H1 (cell line): ENCODE measurements at regions of chr4 and their contacts with region 1.

Region 1: DNA sequence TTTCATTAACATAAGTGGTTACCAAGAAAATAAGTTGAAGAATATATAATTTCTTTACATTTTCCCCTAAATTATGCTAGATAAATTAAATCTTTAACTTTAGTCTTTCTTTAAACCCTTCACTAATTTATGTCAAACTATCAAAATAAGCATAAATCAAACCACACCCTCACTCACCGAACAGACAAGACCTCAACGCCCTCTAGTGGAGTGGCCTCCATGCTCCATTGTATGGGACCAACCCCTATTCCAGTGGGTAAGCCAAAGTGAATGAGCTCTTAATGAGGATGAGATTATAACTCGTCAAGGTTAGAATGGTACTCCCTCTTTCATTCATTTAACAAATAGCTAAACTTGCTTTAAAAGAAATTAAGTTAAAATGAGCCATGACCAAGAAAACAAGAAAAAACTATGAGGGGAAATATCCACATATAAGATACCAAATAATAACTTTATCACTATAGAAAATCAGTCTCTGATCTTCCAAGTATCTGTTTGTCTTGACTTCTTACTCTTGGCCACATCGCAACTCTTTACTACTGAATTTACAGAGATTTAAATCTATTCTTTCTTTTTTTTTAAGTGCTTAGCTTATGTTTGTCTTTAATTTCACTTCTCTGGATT is 15.6 kb upstream of the BBS12 start:
- DNase-seq: peak in 1 of 2 experiments; percentile 69
- H3K4me3 ChIP-seq: no peak overlapping the region
- H3K27ac ChIP-seq: no peak overlapping the region
- H3K4me1 ChIP-seq: no peaks in the 10 kb centered on the region
- H3K27me3 ChIP-seq: no peaks in the 10 kb centered on the region
- CTCF ChIP-seq: peak; percentile 72 to 88 (median 85)
- EP300 ChIP-seq: no peak
- POLR2A ChIP-seq: no peak
- RAD21 ChIP-seq: peak; percentile 84

Region 2: DNA sequence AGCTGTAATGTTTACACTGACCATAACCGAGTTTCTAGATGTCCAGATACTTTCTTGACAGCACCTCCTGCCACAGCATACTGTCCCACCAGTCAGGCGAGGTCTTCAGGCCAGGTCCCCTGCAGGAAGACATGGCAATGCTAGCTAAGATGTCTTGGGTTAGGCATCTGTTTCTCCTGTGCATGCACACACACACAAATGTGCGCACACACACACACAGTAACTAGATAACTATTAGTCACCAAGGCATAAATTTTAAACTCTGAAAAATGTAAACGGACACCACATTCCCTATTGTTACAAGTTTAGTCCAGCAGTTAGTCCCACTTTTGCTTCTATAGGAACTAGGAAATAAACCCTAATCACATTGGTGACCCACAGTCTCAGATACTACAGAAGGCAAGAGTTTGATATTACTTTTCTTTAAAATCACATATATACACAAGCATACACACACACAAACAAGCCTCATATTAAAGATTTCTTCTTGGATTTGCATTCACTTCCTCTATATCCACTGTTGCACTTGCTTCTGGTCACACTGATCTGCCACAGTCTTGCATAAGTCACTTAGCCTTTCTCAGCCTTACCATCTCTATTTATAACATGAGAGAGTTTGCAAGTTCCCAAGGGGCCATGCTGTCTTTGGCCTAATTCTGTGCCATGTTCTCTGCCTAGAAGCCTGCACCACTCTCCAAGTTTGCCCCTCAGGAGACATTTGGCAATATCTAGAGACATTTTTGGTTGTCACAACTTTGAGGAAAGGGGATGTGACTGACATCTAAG is 128.3 kb before region 1 on chr4:
- CTCF ChIA-PET with region 1: interaction called, 10 read pairs
- POLR2A ChIA-PET with region 1: no interaction called
- DNase-seq: no peak
- H3K4me3 ChIP-seq: no peak overlapping the region
- H3K27ac ChIP-seq: no peak overlapping the region
- H3K4me1 ChIP-seq: no peaks in the 10 kb centered on the region
- H3K27me3 ChIP-seq: no peaks in the 10 kb centered on the region
- CTCF ChIP-seq: no peak
- EP300 ChIP-seq: no peak
- POLR2A ChIP-seq: no peak
- RAD21 ChIP-seq: no peak

Region 3: DNA sequence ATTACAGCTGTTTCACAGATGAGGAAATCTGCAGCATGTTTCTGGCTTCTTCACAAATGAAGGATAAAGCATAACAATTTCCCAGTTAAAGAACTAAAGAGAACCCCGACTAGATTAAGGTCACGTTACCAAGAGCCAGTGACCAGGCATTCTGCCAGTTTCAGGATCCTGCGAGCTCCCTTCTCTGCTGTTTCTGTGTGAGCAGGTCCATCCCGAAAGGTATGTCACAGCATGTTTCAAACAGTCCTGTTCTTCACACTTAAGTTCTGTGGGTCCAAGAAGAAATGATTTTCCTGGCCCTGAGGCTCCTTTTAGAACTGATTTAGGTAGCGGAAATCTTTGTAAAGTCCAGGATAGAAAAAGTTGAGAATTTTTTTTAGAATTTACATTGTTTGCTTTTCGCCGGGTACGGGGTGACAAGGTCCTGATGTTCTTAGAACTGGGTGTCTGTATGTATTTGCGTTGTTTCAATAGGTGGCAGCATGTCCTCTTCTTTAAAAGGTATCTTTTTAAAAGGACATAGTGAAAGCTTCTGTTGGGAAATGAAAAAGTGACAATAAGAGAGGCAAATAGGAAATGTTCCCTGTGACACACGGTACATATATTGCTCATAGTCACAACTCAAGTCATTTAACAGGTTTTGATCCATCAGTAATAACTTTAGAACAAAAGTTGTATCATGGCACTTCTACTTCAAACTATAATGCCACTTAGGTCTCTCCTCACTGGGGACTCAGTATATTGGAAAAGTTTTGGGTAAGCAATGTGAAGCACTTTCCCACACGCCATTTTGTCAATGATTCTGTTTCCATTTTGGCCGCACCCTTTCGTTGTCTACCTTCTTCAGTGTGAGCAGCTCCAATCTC is 114.4 kb before region 1 on chr4:
- CTCF ChIA-PET with region 1: interaction called, 36 read pairs
- POLR2A ChIA-PET with region 1: no interaction called
- DNase-seq: no peak
- H3K4me3 ChIP-seq: no peak overlapping the region
- H3K27ac ChIP-seq: no peak overlapping the region
- H3K4me1 ChIP-seq: peaks cover 2 to 13% (median 7%) of the 10 kb centered on the region in 4 experiments; a peak in 4 of 7 replicates
- H3K27me3 ChIP-seq: no peaks in the 10 kb centered on the region
- CTCF ChIP-seq: peak in 2 of 3 experiments; percentile 38 to 39; a peak in 2 of 4 replicates
- EP300 ChIP-seq: no peak
- POLR2A ChIP-seq: no peak
- RAD21 ChIP-seq: peak; percentile 67 to 75

Region 4: DNA sequence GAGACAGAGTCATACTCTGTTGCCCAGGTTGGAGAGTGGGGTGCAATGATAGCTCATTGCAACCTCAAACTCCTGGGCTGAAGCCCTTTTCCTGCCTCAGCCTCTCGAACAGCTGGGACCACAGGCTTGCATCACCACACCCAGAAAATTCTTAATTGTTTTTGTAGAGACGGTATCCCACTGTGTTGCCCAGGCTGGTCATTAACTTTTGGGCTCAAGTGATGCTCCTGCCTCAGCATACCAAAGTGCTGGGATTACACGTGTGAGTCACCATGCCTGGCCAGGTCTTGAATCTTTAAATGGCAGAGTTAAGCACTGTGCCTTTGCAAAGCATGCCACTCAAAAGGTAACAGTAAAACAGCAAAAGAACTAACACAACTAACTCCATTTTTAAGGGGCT is 13.1 kb before region 1 on chr4:
- CTCF ChIA-PET with region 1: interaction called, 15 read pairs
- POLR2A ChIA-PET with region 1: no interaction called
- DNase-seq: no peak
- H3K4me3 ChIP-seq: no peak overlapping the region
- H3K27ac ChIP-seq: no peak overlapping the region
- H3K4me1 ChIP-seq: no peaks in the 10 kb centered on the region
- H3K27me3 ChIP-seq: no peaks in the 10 kb centered on the region; a peak in 1 of 7 replicates
- CTCF ChIP-seq: no peak
- EP300 ChIP-seq: no peak
- POLR2A ChIP-seq: no peak
- RAD21 ChIP-seq: no peak

Region 5: DNA sequence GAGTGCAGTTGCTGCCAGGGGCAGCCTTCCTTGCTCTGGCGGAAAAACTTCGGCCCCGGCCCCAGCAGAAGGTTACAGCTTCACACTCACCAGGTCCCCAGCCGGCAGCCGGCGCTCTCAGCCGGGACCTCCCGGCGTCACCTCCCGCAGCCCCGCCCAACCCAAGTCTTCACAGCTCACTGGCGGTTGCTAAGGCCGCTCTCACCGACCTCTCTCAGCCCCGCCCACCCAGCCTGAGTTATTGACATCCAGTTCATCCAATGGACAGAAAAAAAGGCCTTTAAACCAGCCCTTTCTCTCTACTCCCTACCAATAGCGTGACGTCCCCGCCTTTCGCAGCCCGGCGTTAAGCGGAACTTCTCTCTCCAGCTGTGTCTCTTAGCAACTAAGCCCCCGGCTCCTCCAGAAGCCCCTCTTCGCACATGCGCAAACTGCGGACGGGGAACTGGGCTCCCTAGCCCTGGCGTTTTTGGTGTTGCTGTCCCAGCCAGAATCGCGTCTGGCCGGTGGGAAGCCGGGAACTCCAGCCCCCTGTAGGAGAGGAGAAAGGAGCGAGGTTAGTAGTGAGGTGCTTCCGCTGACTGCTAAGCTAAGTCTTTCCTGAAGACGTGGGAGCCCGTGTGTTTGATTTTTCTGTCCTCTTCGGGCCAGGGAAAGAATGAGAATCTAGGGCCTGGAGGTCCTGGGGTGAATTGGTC is 15.5 kb after region 1 on chr4 and contains the start of gene BBS12:
- CTCF ChIA-PET with region 1: interaction called, 47 read pairs
- POLR2A ChIA-PET with region 1: interaction called, 4 read pairs
- DNase-seq: peak; percentile 99
- H3K4me3 ChIP-seq: peak within 1 kb of the TSS; percentile 54 to 77 (median 74)
- H3K27ac ChIP-seq: peak within 1 kb of the TSS; percentile 76
- H3K4me1 ChIP-seq: peaks cover 0 to 10% (median 0%) of the 10 kb centered on the region in 4 experiments; a peak in 2 of 7 replicates
- H3K27me3 ChIP-seq: no peaks in the 10 kb centered on the region
- CTCF ChIP-seq: peak in 2 of 3 experiments; percentile 16 to 22; a peak in 2 of 4 replicates
- EP300 ChIP-seq: no peak
- POLR2A ChIP-seq: peak in 1 of 2 experiments; percentile 67; a peak in 2 of 3 replicates
- RAD21 ChIP-seq: peak; percentile 29 to 56
- total RNA-seq, gene BBS12: 2.6 TPM in 2 replicates

Region 6: DNA sequence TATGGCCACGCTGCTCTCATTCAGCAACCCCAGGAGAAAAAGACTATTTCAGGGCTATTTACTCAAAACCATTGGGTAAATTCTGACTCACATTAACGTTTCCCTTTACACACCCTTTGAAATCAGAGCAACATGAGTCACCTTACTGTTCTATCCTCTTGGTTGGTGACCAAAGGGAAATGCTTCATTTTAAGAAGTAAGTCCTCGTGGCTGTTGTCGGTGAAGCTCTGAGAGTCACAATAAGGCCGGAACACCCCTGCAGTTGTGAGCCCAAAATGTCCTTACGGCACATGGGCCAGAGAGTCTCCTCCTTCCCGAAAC is 623.4 kb after region 1 on chr4:
- CTCF ChIA-PET with region 1: no interaction called
- POLR2A ChIA-PET with region 1: no interaction called
- DNase-seq: no peak
- H3K4me3 ChIP-seq: no peak overlapping the region
- H3K27ac ChIP-seq: no peak overlapping the region
- H3K4me1 ChIP-seq: peaks cover 0 to 4% (median 1%) of the 10 kb centered on the region in 4 experiments; a peak in 3 of 7 replicates
- H3K27me3 ChIP-seq: no peaks in the 10 kb centered on the region
- CTCF ChIP-seq: no peak
- EP300 ChIP-seq: no peak
- POLR2A ChIP-seq: no peak
- RAD21 ChIP-seq: no peak